PC-3 (cell line): ENCODE measurements at regions of chrX and their contacts with region 1.

Region 1: DNA sequence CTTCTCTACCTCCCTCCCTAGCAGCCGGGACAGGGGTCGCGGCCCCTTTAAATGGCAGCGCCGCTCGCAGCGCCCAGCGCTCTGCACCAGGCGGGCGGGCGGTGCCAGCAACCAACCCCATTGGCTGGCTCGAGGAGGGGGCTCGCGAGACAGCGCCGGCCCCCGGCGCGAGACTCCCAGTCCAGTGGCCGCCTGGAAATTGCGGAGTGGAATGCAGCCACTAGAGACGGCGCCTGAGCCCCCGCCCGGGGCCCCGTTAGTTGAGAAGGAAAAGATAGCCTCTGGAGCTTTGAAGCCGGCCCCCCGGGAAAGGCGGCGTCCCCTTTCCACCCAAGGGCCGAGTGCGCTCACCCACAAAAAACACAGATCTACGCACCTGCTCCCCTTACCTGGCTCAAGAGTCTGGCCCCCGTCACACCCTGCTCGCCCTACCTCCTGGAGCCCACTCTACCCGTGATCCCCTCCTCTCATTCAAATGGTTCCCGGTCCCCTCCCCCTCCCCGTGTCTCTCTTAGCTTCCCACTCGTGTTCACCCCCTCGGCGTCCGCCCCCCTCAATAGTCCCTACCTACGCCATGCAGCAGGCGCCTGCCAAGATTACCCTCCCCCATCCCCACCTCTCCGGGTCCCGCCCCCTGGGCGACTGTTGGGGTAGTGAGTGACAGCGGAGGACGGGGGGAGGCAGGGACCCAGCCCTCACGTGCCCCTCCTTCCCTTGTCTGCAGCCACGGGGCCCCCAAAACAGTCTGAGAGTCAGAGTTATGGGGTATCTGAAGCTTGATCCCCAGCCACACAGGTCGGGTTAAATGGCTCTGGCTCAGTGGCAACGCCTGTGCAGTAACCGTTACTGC is at the start of gene ZMYM3:
- DNase-seq: peak; percentile 85
- ATAC-seq: peak; percentile 85
- H3K4me3 ChIP-seq: peak within 1 kb of the TSS; percentile 99
- H3K27ac ChIP-seq: no peak within 1 kb of the TSS
- H3K4me1 ChIP-seq: peaks cover 17% of the 10 kb centered on the region
- H3K27me3 ChIP-seq: no peaks in the 10 kb centered on the region
- CTCF ChIP-seq: no peak
- total RNA-seq, gene ZMYM3: 23.5 and 25.2 TPM in 2 replicates

Region 2: DNA sequence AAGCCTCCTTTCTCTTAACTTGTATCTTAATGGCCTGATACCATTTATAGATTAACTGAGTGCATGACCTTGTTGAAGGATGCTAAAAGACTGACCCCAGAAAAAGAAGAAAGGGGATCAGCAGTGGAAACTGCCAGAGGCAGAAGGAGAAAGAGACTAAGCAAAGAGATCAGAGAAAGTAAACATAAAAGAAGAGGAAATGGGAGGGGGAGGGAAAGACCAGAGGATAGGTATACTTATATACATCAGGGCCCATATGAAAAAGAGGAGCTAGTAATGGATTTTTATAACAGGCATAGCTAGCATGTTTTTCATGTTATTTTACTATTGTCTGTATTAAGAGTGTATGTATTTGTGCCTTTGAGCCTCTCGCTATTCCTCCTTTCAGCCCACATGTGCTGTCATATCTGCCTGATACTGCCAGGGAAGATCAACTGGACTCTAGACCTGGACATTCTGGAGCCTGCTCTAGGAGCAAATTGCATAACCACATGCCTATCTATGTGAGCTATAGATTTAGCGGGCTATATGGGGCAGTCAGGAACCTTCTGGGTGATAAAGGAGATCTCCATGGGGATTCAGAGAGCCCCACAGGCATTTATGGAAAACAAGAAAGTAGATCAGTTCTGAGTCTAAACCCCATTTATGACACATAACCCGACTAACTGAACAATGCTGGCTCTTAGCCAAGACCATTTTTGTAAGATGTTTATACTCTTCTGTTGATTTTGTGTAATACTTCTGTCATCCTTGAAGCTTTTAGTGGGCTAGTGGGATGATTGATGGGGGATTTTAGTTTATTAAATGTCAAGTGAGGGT is 172.8 kb before region 1 on chrX:
- CTCF ChIA-PET with region 1: no interaction called
- POLR2A ChIA-PET with region 1: interaction called, 11 read pairs
- intact Hi-C with region 1: no loop called
- DNase-seq: peak; percentile 79
- ATAC-seq: peak; percentile 56
- H3K4me3 ChIP-seq: no peak overlapping the region
- H3K27ac ChIP-seq: no peak overlapping the region
- H3K4me1 ChIP-seq: peaks cover 14% of the 10 kb centered on the region
- H3K27me3 ChIP-seq: no peaks in the 10 kb centered on the region
- CTCF ChIP-seq: no peak

Region 3: DNA sequence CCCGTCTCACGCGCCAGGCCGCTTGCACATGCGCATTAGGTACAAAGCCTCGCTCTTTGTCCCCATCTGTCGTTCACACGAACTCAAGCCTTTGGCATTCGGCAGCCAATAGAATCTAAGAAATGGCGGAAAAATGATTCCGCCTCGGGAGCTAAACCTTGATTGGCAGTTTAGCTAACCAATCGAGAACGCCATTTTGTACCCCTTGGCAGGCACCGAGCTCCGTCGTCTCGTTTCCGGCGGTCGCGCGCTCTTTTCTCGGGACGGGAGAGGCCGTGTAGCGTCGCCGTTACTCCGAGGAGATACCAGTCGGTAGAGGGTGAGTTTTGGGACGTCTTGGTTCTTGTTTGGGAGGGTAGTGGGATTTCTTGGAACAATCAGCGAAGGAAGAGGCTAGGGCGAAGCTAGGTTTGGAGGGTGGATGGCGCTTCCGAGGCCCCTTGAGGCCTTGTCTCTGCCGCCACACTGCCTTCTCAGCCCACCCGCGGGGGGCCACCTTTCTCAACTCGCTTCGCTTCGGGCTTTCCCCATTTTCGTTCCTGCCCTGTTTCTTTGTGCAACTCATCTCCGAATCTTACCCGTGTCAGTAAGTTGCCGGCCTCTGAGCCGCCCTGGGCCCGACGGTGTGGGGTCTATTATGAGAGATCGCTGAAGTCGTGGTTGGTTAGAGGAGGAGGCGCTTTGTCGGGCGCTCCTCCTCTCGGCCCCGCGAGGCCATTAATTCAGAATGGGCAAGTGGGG is 29.3 kb after region 1 on chrX and contains the start of gene NONO:
- CTCF ChIA-PET with region 1: interaction called, 4 read pairs
- POLR2A ChIA-PET with region 1: interaction called, 6 read pairs
- intact Hi-C with region 1: loop called (anchors 1 kb)
- DNase-seq: peak; percentile 99
- ATAC-seq: peak; percentile 85
- H3K4me3 ChIP-seq: peak within 1 kb of the TSS; percentile 94
- H3K27ac ChIP-seq: peak within 1 kb of the TSS; percentile 74
- H3K4me1 ChIP-seq: peaks cover 7% of the 10 kb centered on the region
- H3K27me3 ChIP-seq: no peaks in the 10 kb centered on the region
- CTCF ChIP-seq: peak; percentile 17; the same call in 1 of the 2 replicates
- total RNA-seq, gene NONO: 514 and 631 TPM in 2 replicates